ENCODE measurements at regions of chr6 and their contacts with region 1.

Region 1: DNA sequence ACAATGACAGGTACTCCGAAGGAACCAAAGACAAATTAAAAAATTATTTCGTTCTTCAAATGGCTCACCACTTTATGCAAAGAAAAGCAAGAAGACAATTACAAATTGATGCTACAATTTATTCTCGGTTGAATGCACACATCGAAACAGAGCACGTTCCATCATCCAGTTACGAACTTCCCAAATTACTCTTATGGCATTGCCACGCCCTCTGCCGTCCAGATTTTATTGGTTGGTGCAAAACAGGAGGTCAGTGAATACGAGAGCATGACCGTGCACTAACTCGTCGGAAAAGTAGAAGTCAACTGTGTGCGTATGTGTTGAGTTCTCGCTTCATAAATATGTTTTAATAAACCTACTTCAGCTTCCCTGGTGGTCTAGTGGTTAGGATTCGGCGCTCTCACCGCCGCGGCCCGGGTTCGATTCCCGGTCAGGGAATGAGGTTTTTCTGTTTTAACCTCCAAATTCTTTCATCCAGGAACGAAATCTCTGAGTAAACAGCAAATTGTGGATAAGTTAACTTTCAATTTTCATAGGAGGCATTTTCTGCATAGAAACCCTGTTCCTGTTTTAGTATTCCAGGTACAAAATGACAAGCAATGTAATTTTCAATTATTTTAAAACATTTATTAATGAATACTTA is 23.2 kb downstream of the ZNF311 start:
- DNase-seq: peak; percentile 79 to 96
- H3K4me3 ChIP-seq: peak overlapping the region; percentile 63 to 64
- H3K27ac ChIP-seq: peak overlapping the region; percentile 74 to 79
- H3K4me1 ChIP-seq: no peaks in the 10 kb centered on the region
- H3K27me3 ChIP-seq: no peaks in the 10 kb centered on the region
- CTCF ChIP-seq: peak in 1 of 3 experiments; percentile 18

Region 2: GRCh38 chr6:27177485-27178406 is 1804.2 kb before region 1 on chr6:
- intact Hi-C with region 1: loop called (anchors 5 kb)
- DNase-seq: peak; percentile 46 to 92
- H3K4me3 ChIP-seq: peak overlapping the region; percentile 75 to 81
- H3K27ac ChIP-seq: peak overlapping the region; percentile 80 to 85
- H3K4me1 ChIP-seq: peaks cover 0 to 7% of the 10 kb centered on the region in 2 donors
- H3K27me3 ChIP-seq: no peaks in the 10 kb centered on the region
- CTCF ChIP-seq: peak in 2 of 3 experiments; percentile 53 to 66

Region 3: DNA sequence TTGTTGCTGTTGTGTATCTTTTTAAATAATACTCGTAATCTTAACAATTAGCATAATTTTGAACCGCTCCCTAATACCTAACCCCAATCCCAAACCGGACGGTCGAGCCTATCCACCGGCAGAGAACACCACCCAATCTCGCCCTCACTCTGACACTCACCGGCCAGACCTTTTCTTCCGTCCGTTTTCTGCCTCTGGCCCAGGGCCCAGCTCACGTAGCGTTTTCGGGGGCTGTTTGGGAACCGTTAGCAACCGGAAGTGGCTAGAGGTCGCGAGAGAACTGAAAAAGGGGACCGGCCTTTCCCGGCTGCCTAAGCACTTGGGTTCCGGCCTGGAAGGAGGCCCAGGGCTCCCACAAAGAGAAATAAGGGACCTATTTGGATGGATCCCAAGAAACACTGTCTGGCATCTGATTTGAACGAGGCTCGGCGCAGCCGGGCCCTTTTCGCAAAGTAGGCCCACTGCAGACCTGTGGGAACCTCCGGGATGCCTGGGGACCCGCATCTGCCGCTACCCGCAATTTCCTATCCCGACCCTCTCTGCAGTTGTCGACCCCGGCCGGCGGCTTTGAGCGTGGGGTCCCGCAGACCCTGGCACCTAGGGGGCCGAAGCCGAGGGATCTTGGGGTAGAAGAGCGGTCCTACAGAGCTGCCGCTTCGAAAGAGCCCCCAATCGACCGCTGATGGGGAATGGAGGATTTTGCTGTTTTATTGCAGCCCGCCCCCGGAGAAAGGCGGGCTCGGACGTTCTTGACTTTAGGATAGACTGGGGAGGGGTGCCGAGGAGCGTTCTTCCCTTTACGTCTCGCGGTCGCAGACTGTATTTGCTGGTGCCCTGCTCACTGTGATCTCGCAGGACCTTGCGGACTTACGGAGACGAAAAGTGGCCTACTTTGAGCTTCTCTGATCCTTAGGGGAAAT is 845.1 kb before region 1 on chr6:
- intact Hi-C with region 1: loop called (anchors 5 kb)
- DNase-seq: peak; percentile 60 to 95
- H3K4me3 ChIP-seq: peak overlapping the region; percentile 74 to 97
- H3K27ac ChIP-seq: peak overlapping the region; percentile 95 to 98
- H3K4me1 ChIP-seq: peaks cover 0 to 26% of the 10 kb centered on the region in 2 donors
- H3K27me3 ChIP-seq: no peaks in the 10 kb centered on the region
- CTCF ChIP-seq: no peak

Region 4: GRCh38 chr6:28838634-28839442 is 143.1 kb before region 1 on chr6:
- intact Hi-C with region 1: loop called (anchors 1 kb)
- DNase-seq: peak; percentile 30 to 88
- H3K4me3 ChIP-seq: peak overlapping the region; percentile 70 to 86
- H3K27ac ChIP-seq: peak overlapping the region; percentile 62 to 68
- H3K4me1 ChIP-seq: peaks cover 0 to 6% of the 10 kb centered on the region in 2 donors
- H3K27me3 ChIP-seq: no peaks in the 10 kb centered on the region
- CTCF ChIP-seq: peak; percentile 36 to 60 (median 55)

Region 5: GRCh38 chr6:28868873-28869272 is 113.1 kb before region 1 on chr6:
- intact Hi-C with region 1: no loop called
- DNase-seq: no peak
- H3K4me3 ChIP-seq: no peak overlapping the region
- H3K27ac ChIP-seq: no peak overlapping the region
- H3K4me1 ChIP-seq: peaks cover 0 to 3% of the 10 kb centered on the region in 2 donors
- H3K27me3 ChIP-seq: no peaks in the 10 kb centered on the region
- CTCF ChIP-seq: no peak

Region 6: GRCh38 chr6:28895134-28895812 is 86.7 kb before region 1 on chr6:
- intact Hi-C with region 1: loop called (anchors 1 kb)
- DNase-seq: peak; percentile 86 to 98
- H3K4me3 ChIP-seq: peak overlapping the region; percentile 60 to 72
- H3K27ac ChIP-seq: peak overlapping the region; percentile 95 to 96
- H3K4me1 ChIP-seq: no peaks in the 10 kb centered on the region
- H3K27me3 ChIP-seq: no peaks in the 10 kb centered on the region
- CTCF ChIP-seq: no peak

Region 7: DNA sequence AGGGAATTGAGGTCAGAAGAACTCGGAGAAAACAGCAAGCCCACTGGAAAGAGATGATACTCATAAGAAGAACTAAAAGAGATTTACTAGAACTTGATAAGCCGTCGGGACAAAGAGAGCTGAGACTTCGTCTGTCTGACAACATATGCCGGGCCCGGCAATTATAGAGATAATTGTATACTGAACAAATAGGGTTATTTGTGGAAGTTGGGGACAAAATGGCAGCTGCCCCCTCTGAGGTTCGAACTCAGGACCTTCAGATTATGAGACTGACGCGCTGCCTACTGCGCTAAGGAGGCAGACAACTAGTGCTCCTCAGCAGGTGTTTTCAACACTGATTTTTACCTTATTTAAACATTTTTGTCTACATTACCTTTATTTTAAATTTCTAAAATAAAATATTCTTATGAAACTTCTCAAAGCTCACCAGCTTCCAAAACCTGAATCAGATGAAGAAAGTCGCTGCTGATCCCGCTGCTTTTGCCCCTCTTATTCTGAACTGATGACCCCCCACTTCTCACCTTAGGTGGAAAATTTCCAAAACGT is 28.8 kb before region 1 on chr6:
- intact Hi-C with region 1: no loop called
- DNase-seq: no peak
- H3K4me3 ChIP-seq: peak overlapping the region in 1 of 2 donors; percentile 11
- H3K27ac ChIP-seq: no peak overlapping the region
- H3K4me1 ChIP-seq: no peaks in the 10 kb centered on the region
- H3K27me3 ChIP-seq: no peaks in the 10 kb centered on the region
- CTCF ChIP-seq: no peak

Region 8: GRCh38 chr6:29005183-29005885 is 23.4 kb after region 1 on chr6 and contains the start of gene ZNF311:
- intact Hi-C with region 1: loop called (anchors 2 kb)
- DNase-seq: peak in 1 of 2 donors; percentile 78
- H3K4me3 ChIP-seq: peak within 1 kb of the TSS; percentile 62 to 78
- H3K27ac ChIP-seq: peak within 1 kb of the TSS; percentile 67 to 69
- H3K4me1 ChIP-seq: peaks cover 0 to 5% of the 10 kb centered on the region in 2 donors
- H3K27me3 ChIP-seq: no peaks in the 10 kb centered on the region
- CTCF ChIP-seq: no peak
- total RNA-seq, gene ZNF311: not detected